Naive thymus-derived CD4-positive, alpha-beta T cell (primary cell): ENCODE measurements at regions of chr9 and their contacts with region 1.

Region 1: GRCh38 chr9:116661037-116661954 is 25.8 kb upstream of the TRIM32 start:
- DNase-seq: peak in 6 of 9 donors; percentile 3 to 39 (median 25)
- ATAC-seq: no peak
- H3K4me3 ChIP-seq: no peak overlapping the region
- H3K4me3 Mint-ChIP-seq: no peak overlapping the region
- H3K27ac ChIP-seq: no peak overlapping the region
- H3K27ac Mint-ChIP-seq: no peak overlapping the region
- H3K4me1 ChIP-seq: no peaks in the 10 kb centered on the region
- H3K4me1 Mint-ChIP-seq: no peaks in the 10 kb centered on the region
- H3K27me3 ChIP-seq: no peaks in the 10 kb centered on the region
- H3K27me3 Mint-ChIP-seq: no peaks in the 10 kb centered on the region

Region 2: GRCh38 chr9:115013998-115014397 is 1647.3 kb before region 1 on chr9:
- CTCF ChIA-PET with region 1: no interaction called
- POLR2A ChIA-PET with region 1: no interaction called
- intact Hi-C with region 1: loop called in 1 of 2 experiments (anchors 10 kb)
- DNase-seq: peak; percentile 57 to 84 (median 79)
- ATAC-seq: peak; percentile 88
- H3K4me3 ChIP-seq: no peak overlapping the region
- H3K4me3 Mint-ChIP-seq: peak overlapping the region in 1 of 10 donors; percentile 24
- H3K27ac ChIP-seq: no peak overlapping the region
- H3K27ac Mint-ChIP-seq: peak overlapping the region in 2 of 9 donors; percentile 12 to 79
- H3K4me1 ChIP-seq: peaks cover 0 to 4% of the 10 kb centered on the region in 2 donors
- H3K4me1 Mint-ChIP-seq: peaks cover 5 to 59% (median 12%) of the 10 kb centered on the region in 7 donors
- H3K27me3 ChIP-seq: no peaks in the 10 kb centered on the region
- H3K27me3 Mint-ChIP-seq: peaks cover 4 to 14% (median 7%) of the 10 kb centered on the region in 5 donors

Region 3: GRCh38 chr9:116149844-116150243 is 511.5 kb before region 1 on chr9:
- CTCF ChIA-PET with region 1: no interaction called
- POLR2A ChIA-PET with region 1: no interaction called
- intact Hi-C with region 1: loop called in 1 of 2 experiments (anchors 1 kb)
- DNase-seq: no peak
- ATAC-seq: no peak
- H3K4me3 ChIP-seq: no peak overlapping the region
- H3K4me3 Mint-ChIP-seq: no peak overlapping the region
- H3K27ac ChIP-seq: no peak overlapping the region
- H3K27ac Mint-ChIP-seq: no peak overlapping the region
- H3K4me1 ChIP-seq: no peaks in the 10 kb centered on the region
- H3K4me1 Mint-ChIP-seq: peaks cover 0 to 8% (median 5%) of the 10 kb centered on the region in 7 donors
- H3K27me3 ChIP-seq: no peaks in the 10 kb centered on the region
- H3K27me3 Mint-ChIP-seq: peaks cover 46 to 66% (median 59%) of the 10 kb centered on the region in 5 donors

Region 4: DNA sequence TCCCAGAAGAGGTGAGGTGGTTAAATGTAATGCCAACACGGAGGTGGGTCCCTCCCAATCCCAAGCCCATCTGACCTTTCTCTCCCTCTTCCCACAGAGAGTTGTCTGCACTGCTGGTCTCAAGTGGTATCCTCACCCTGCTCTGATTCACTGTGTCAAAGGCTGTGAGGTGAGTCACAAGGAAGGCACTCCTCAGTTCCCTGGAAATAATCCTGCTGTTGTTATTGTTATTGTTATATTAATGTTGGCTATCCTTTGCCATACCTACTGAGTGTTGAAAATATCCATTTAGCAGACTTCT is 283.9 kb before region 1 on chr9:
- CTCF ChIA-PET with region 1: no interaction called
- POLR2A ChIA-PET with region 1: no interaction called
- intact Hi-C with region 1: no loop called
- DNase-seq: no peak
- ATAC-seq: no peak
- H3K4me3 ChIP-seq: no peak overlapping the region
- H3K4me3 Mint-ChIP-seq: no peak overlapping the region
- H3K27ac ChIP-seq: no peak overlapping the region
- H3K27ac Mint-ChIP-seq: no peak overlapping the region
- H3K4me1 ChIP-seq: no peaks in the 10 kb centered on the region
- H3K4me1 Mint-ChIP-seq: peaks cover 0 to 1% (median 0%) of the 10 kb centered on the region in 7 donors
- H3K27me3 ChIP-seq: no peaks in the 10 kb centered on the region
- H3K27me3 Mint-ChIP-seq: no peaks in the 10 kb centered on the region

Region 5: GRCh38 chr9:116417407-116417816 is 243.9 kb before region 1 on chr9:
- CTCF ChIA-PET with region 1: no interaction called
- POLR2A ChIA-PET with region 1: no interaction called
- intact Hi-C with region 1: no loop called
- DNase-seq: no peak
- ATAC-seq: no peak
- H3K4me3 ChIP-seq: no peak overlapping the region
- H3K4me3 Mint-ChIP-seq: no peak overlapping the region
- H3K27ac ChIP-seq: no peak overlapping the region
- H3K27ac Mint-ChIP-seq: no peak overlapping the region
- H3K4me1 ChIP-seq: no peaks in the 10 kb centered on the region
- H3K4me1 Mint-ChIP-seq: no peaks in the 10 kb centered on the region
- H3K27me3 ChIP-seq: no peaks in the 10 kb centered on the region
- H3K27me3 Mint-ChIP-seq: no peaks in the 10 kb centered on the region

Region 6: DNA sequence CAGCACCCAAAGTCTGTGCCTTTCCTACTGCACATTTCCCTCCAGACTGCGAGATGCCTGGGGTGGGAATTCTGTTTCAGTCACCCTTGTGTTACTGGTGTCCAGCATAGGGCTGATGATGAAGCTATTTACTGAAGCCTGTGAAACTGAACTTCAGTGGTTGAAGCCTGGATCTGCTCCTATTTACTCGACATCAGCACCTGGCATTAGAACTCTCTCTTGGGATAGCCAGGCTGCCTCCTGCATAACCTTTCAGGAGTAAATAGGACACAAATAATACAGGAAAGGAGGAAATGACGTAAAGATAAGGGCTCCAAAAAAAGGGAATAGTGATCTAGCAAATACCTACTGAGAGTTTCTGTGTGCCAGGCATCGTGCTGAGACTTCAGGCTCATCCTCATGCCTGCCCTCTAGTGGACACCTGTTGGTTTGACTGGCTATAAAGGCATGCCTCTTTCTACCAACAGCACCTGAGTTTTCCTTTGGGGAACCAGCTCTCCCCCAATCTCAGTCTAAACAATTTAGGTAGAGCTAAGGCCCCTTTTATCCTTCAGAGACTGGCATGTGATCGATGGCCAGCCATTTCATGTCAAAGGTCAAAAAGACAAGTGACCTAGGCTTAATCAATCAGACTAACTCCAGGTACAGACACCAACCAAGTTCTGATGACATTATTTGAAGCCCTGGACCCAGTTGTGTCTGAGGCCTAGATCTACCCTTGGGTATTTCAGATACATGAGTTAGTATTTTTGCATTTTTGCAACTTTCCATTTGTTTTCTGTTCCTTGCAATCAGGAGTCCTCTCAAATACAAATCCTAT is 166.3 kb before region 1 on chr9:
- CTCF ChIA-PET with region 1: no interaction called
- POLR2A ChIA-PET with region 1: no interaction called
- intact Hi-C with region 1: loop called in 1 of 2 experiments (anchors 1 kb)
- DNase-seq: peak in 4 of 9 donors; percentile 3 to 23 (median 6)
- ATAC-seq: no peak
- H3K4me3 ChIP-seq: no peak overlapping the region
- H3K4me3 Mint-ChIP-seq: no peak overlapping the region
- H3K27ac ChIP-seq: no peak overlapping the region
- H3K27ac Mint-ChIP-seq: no peak overlapping the region
- H3K4me1 ChIP-seq: no peaks in the 10 kb centered on the region
- H3K4me1 Mint-ChIP-seq: peaks cover 0 to 4% (median 0%) of the 10 kb centered on the region in 7 donors
- H3K27me3 ChIP-seq: no peaks in the 10 kb centered on the region
- H3K27me3 Mint-ChIP-seq: no peaks in the 10 kb centered on the region